ENCODE measurements at regions of chr13 and their contacts with region 1.

Region 1: GRCh38 chr13:35630551-35631275 is 154.2 kb upstream of the MAB21L1 start:
- DNase-seq: peak; percentile 16
- H3K4me3 ChIP-seq: no peak overlapping the region
- H3K27ac ChIP-seq: no peak overlapping the region
- H3K27me3 ChIP-seq: no peaks in the 10 kb centered on the region
- CTCF ChIP-seq: peak; percentile 87

Region 2: GRCh38 chr13:33940898-33941297 is 1689.8 kb before region 1 on chr13:
- CTCF ChIA-PET with region 1: no interaction called
- POLR2A ChIA-PET with region 1: no interaction called
- DNase-seq: no peak
- H3K4me3 ChIP-seq: no peak overlapping the region
- H3K27ac ChIP-seq: no peak overlapping the region
- H3K27me3 ChIP-seq: no peaks in the 10 kb centered on the region
- CTCF ChIP-seq: no peak

Region 3: GRCh38 chr13:34128613-34129012 is 1502.1 kb before region 1 on chr13:
- CTCF ChIA-PET with region 1: no interaction called
- POLR2A ChIA-PET with region 1: no interaction called
- DNase-seq: no peak
- H3K4me3 ChIP-seq: no peak overlapping the region
- H3K27ac ChIP-seq: no peak overlapping the region
- H3K27me3 ChIP-seq: no peaks in the 10 kb centered on the region
- CTCF ChIP-seq: no peak

Region 4: GRCh38 chr13:35603593-35604285 is 27.0 kb before region 1 on chr13:
- CTCF ChIA-PET with region 1: interaction called, 10 read pairs
- POLR2A ChIA-PET with region 1: no interaction called
- DNase-seq: no peak
- H3K4me3 ChIP-seq: no peak overlapping the region
- H3K27ac ChIP-seq: no peak overlapping the region
- H3K27me3 ChIP-seq: no peaks in the 10 kb centered on the region
- CTCF ChIP-seq: no peak

Region 5: DNA sequence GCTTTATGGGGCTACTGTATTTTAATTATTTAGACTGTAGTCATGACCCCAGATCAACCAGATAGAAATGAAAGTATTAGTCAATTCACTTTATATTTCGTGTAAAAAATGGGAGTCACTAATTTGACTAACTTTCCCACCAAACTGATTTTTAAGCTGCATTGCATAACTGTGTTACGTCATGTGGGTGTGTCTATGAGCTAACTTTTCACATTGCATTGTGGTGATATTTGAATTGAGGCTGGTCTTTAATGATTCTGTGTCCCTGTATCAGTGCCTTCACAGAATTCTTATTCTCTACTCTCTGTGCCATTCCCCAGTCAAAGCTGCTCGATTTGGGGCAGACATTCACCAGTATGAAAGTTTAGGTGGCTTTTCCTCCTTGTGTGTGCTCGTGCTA is 18.4 kb after region 1 on chr13:
- CTCF ChIA-PET with region 1: interaction called, 34 read pairs
- POLR2A ChIA-PET with region 1: no interaction called
- DNase-seq: no peak
- H3K4me3 ChIP-seq: no peak overlapping the region
- H3K27ac ChIP-seq: no peak overlapping the region
- H3K27me3 ChIP-seq: no peaks in the 10 kb centered on the region
- CTCF ChIP-seq: no peak

Region 6: GRCh38 chr13:35789335-35790165 is 158.8 kb after region 1 on chr13:
- CTCF ChIA-PET with region 1: interaction called, 83 read pairs
- POLR2A ChIA-PET with region 1: no interaction called
- DNase-seq: no peak
- H3K4me3 ChIP-seq: no peak overlapping the region
- H3K27ac ChIP-seq: no peak overlapping the region
- H3K27me3 ChIP-seq: no peaks in the 10 kb centered on the region
- CTCF ChIP-seq: peak; percentile 69

Region 7: DNA sequence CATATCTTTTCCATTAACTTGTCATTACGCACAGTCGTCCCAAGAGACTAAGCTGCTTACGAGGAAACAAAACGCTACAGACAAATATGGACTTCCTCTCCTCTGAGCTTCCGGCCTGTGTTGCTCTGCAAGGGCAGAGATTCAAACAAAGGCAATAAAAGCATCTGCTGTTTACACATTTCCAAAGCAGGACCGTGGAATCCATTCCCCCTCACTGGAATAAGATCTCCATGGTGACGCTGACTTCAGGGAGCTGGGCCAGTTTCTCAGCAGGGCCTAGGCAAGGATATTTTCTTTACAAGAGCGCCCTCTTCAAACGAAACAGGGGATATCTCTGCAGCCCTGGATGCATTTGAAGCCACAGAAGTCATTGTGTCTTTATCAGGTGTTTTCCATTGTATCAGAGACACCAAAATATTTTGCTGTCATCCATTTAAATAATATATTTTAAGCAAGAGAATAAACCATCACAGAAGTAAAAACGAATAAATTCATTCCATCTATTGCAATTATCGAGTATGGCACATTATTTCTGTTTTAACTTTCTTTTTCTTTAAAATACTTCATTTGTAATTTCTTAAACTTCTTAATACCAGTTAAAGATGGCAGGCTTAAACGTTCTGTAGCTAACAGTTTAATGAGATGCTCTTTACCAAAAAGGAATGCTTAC is 323.0 kb after region 1 on chr13:
- CTCF ChIA-PET with region 1: interaction called, 21 read pairs
- POLR2A ChIA-PET with region 1: no interaction called
- DNase-seq: peak; percentile 79
- H3K4me3 ChIP-seq: peak overlapping the region; percentile 21
- H3K27ac ChIP-seq: no peak overlapping the region
- H3K27me3 ChIP-seq: peaks cover 1% of the 10 kb centered on the region
- CTCF ChIP-seq: peak; percentile 73